ENCODE measurements at regions of chr2 and their contacts with region 1.

Region 1: GRCh38 chr2:37672104-37672869 is 845 bp upstream of the CDC42EP3 start:
- DNase-seq: peak; percentile 82
- H3K4me3 ChIP-seq: peak overlapping the region; percentile 90
- H3K27ac ChIP-seq: peak overlapping the region; percentile 33
- H3K27me3 ChIP-seq: no peaks in the 10 kb centered on the region
- CTCF ChIP-seq: no peak

Region 2: DNA sequence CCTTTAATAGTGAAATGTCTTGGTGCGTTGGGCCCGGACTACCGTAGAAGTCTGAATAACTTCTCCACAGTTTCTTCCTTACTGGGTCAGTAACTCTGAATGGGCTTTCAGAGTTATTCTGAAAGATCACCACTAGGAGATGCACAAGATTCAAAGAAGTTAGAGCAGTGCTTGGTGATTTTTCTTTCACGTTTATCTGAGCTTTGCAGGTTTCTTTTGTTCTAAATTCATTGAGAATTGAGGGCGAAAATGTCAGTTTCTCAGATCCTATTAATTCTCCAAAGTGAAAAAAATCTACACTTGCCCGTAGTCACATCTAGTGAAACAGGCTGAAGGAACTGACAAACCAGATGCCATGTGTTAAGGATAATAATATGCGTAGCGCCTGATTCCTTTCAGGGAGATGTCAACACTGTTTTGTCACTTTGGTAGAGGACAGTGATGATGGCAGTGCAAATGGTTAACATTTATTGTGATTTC is 257.8 kb before region 1 on chr2:
- CTCF ChIA-PET with region 1: interaction called, 11 read pairs
- POLR2A ChIA-PET with region 1: interaction called, 3 read pairs
- DNase-seq: peak; percentile 56
- H3K4me3 ChIP-seq: no peak overlapping the region
- H3K27ac ChIP-seq: no peak overlapping the region
- H3K27me3 ChIP-seq: no peaks in the 10 kb centered on the region
- CTCF ChIP-seq: peak; percentile 94

Region 3: DNA sequence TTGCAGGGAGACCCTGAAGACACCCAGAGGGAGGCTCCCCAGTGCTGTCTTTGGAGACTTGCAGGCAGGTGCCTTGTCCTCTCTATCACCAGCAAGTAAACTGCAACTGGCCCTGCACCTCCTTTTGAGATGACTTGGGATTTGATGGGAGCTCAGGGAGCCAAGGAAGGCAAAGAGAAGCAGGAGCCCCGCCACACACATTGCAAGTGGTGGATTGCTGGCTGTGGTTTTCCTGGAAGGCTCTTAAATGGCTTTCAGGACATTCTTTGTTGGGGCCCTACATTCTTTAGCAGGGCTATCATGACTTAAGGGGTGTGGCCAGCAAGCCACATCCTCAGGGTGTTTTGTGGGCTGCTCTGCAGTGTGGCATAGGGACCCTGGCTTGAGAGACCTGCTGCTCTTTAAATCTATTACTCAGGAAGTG is 39.0 kb after region 1 on chr2:
- CTCF ChIA-PET with region 1: no interaction called
- POLR2A ChIA-PET with region 1: interaction called, 17 read pairs
- DNase-seq: peak; percentile 75
- H3K4me3 ChIP-seq: no peak overlapping the region
- H3K27ac ChIP-seq: peak overlapping the region; percentile 95
- H3K27me3 ChIP-seq: no peaks in the 10 kb centered on the region
- CTCF ChIP-seq: no peak

Region 4: GRCh38 chr2:37764739-37765138 is 92.5 kb after region 1 on chr2:
- CTCF ChIA-PET with region 1: no interaction called
- POLR2A ChIA-PET with region 1: interaction called, 10 read pairs
- DNase-seq: no peak
- H3K4me3 ChIP-seq: no peak overlapping the region
- H3K27ac ChIP-seq: no peak overlapping the region
- H3K27me3 ChIP-seq: no peaks in the 10 kb centered on the region
- CTCF ChIP-seq: no peak

Region 5: GRCh38 chr2:37776487-37776886 is 104.2 kb after region 1 on chr2:
- CTCF ChIA-PET with region 1: no interaction called
- POLR2A ChIA-PET with region 1: interaction called, 10 read pairs
- DNase-seq: peak; percentile 78
- H3K4me3 ChIP-seq: no peak overlapping the region
- H3K27ac ChIP-seq: peak overlapping the region; percentile 87
- H3K27me3 ChIP-seq: no peaks in the 10 kb centered on the region
- CTCF ChIP-seq: no peak

Region 6: DNA sequence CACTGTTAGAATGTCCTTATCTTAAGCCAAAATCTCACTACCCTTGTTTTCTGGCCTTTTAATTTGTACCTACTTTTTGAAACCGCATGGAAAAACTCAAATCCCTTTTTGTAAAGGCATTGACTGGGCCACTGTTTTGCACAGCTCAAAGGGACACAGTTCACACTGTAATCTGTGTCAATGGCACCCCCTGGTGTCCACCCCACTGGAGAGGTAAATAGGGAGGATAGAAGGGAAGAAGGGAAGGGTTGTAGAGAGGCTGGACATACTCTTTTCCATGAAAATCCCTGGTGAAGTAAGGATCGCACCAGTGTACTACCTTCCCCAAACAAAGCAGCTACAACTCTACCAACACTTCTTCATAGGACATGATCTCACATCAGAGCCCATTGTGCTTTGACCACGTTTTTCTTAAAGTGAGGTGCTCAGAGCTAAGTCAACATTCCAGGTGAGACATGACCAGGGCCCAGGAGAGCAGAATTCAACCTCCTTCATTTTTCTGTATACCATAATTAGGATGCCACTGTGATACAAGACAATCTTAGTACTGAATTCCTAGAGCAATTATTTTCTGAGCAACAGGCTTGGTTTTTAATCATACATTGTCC is 160.4 kb after region 1 on chr2:
- CTCF ChIA-PET with region 1: interaction called, 13 read pairs
- POLR2A ChIA-PET with region 1: interaction called, 15 read pairs
- DNase-seq: peak; percentile 64
- H3K4me3 ChIP-seq: no peak overlapping the region
- H3K27ac ChIP-seq: no peak overlapping the region
- H3K27me3 ChIP-seq: no peaks in the 10 kb centered on the region
- CTCF ChIP-seq: peak; percentile 85

Region 7: GRCh38 chr2:37871456-37872191 is 199.3 kb after region 1 on chr2:
- CTCF ChIA-PET with region 1: no interaction called
- POLR2A ChIA-PET with region 1: no interaction called
- DNase-seq: no peak
- H3K4me3 ChIP-seq: no peak overlapping the region
- H3K27ac ChIP-seq: peak overlapping the region; percentile 52
- H3K27me3 ChIP-seq: no peaks in the 10 kb centered on the region
- CTCF ChIP-seq: no peak

Measured in AG04450 (cell line).